T-cell (primary cell): ENCODE measurements at regions of chr7 and their contacts with region 1.

Region 1: GRCh38 chr7:2257651-2258050 is 15.6 kb downstream of the NUDT1 start:
- DNase-seq: no peak
- ATAC-seq: no peak
- H3K4me3 ChIP-seq: no peak overlapping the region
- H3K4me3 Mint-ChIP-seq: no peak overlapping the region
- H3K27ac ChIP-seq: no peak overlapping the region
- H3K27ac Mint-ChIP-seq: no peak overlapping the region
- H3K4me1 ChIP-seq: peaks cover 2 to 31% of the 10 kb centered on the region in 2 experiments
- H3K4me1 Mint-ChIP-seq: peaks cover 10 to 17% (median 12%) of the 10 kb centered on the region in 3 donors
- H3K27me3 ChIP-seq: no peaks in the 10 kb centered on the region
- H3K27me3 Mint-ChIP-seq: no peaks in the 10 kb centered on the region

Region 2: DNA sequence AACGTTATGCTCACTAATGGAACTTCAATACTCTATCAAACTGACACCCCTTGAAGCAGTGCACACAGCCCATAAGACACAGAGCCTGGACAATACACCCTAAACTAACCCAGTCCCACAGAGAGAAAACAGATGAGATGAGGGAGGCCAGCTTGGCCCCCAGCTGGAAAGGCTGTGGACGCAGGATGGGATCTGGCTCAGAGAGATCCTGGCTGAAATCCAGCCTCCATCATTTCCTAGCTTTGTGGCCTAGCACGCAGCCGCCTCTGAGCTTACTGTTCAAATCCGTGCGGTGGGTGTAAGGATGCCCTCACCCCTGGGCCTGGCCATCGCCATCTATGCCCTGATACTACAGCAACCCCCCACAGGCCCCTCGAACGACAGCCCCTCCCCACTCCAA is 23.9 kb after region 1 on chr7:
- CTCF ChIA-PET with region 1: no interaction called
- POLR2A ChIA-PET with region 1: no interaction called
- DNase-seq: no peak
- ATAC-seq: no peak
- H3K4me3 ChIP-seq: no peak overlapping the region
- H3K4me3 Mint-ChIP-seq: no peak overlapping the region
- H3K27ac ChIP-seq: no peak overlapping the region
- H3K27ac Mint-ChIP-seq: no peak overlapping the region
- H3K4me1 ChIP-seq: no peaks in the 10 kb centered on the region
- H3K4me1 Mint-ChIP-seq: peaks cover 0 to 4% (median 0%) of the 10 kb centered on the region in 3 donors
- H3K27me3 ChIP-seq: no peaks in the 10 kb centered on the region
- H3K27me3 Mint-ChIP-seq: no peaks in the 10 kb centered on the region

Region 3: DNA sequence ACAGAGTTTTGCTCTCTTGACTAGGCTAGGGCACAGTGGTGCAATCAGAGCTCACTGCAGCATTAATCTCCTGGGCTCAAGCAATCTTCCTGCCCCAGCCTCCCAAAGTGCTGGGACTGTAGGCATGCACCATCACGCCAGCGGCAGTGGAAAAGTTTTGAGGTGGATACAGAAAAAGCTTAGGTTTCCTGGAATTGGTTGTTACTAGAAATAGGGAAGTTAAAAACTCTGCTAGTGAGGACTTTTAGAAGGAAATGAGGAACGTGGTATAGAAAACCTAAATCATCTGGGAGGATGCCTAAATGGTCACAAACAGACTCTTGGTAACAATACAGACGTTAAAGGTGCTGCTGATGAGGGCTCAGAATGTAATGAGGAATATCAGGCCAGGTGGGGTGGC is 67.5 kb after region 1 on chr7:
- CTCF ChIA-PET with region 1: no interaction called
- POLR2A ChIA-PET with region 1: no interaction called
- DNase-seq: no peak
- ATAC-seq: no peak
- H3K4me3 ChIP-seq: no peak overlapping the region
- H3K4me3 Mint-ChIP-seq: no peak overlapping the region
- H3K27ac ChIP-seq: no peak overlapping the region
- H3K27ac Mint-ChIP-seq: no peak overlapping the region
- H3K4me1 ChIP-seq: no peaks in the 10 kb centered on the region
- H3K4me1 Mint-ChIP-seq: no peaks in the 10 kb centered on the region
- H3K27me3 ChIP-seq: peaks cover 0 to 12% of the 10 kb centered on the region in 2 experiments
- H3K27me3 Mint-ChIP-seq: no peaks in the 10 kb centered on the region

Region 4: GRCh38 chr7:2354186-2354938 is 96.7 kb after region 1 on chr7 and contains the start of gene EIF3B:
- CTCF ChIA-PET with region 1: no interaction called
- POLR2A ChIA-PET with region 1: no interaction called
- DNase-seq: peak; percentile 80 to 95 (median 88)
- ATAC-seq: peak; percentile 88 to 89 (median 89)
- H3K4me3 ChIP-seq: peak within 1 kb of the TSS; percentile 62 to 88
- H3K4me3 Mint-ChIP-seq: peak within 1 kb of the TSS; percentile 82 to 97 (median 91)
- H3K27ac ChIP-seq: peak within 1 kb of the TSS; percentile 96
- H3K27ac Mint-ChIP-seq: peak within 1 kb of the TSS; percentile 100
- H3K4me1 ChIP-seq: peaks cover 15 to 51% of the 10 kb centered on the region in 2 experiments
- H3K4me1 Mint-ChIP-seq: peaks cover 37 to 38% (median 38%) of the 10 kb centered on the region in 3 donors
- H3K27me3 ChIP-seq: no peaks in the 10 kb centered on the region
- H3K27me3 Mint-ChIP-seq: no peaks in the 10 kb centered on the region
- total RNA-seq, gene EIF3B: 150 to 169 (median 165) TPM

Region 5: GRCh38 chr7:2527505-2528451 is 270.1 kb after region 1 on chr7:
- CTCF ChIA-PET with region 1: no interaction called
- POLR2A ChIA-PET with region 1: interaction called in 1 of 2 experiments, 11 read pairs
- DNase-seq: peak in 19 of 35 experiments; percentile 31 to 73 (median 51)
- ATAC-seq: peak in 3 of 4 experiments; percentile 17 to 28 (median 24)
- H3K4me3 ChIP-seq: peak overlapping the region in 1 of 2 donors; percentile 4
- H3K4me3 Mint-ChIP-seq: peak overlapping the region; percentile 28 to 70 (median 36)
- H3K27ac ChIP-seq: peak overlapping the region; percentile 95
- H3K27ac Mint-ChIP-seq: peak overlapping the region; percentile 86 to 89
- H3K4me1 ChIP-seq: peaks cover 49 to 85% of the 10 kb centered on the region in 2 experiments
- H3K4me1 Mint-ChIP-seq: peaks cover 65 to 80% (median 69%) of the 10 kb centered on the region in 3 donors
- H3K27me3 ChIP-seq: no peaks in the 10 kb centered on the region
- H3K27me3 Mint-ChIP-seq: no peaks in the 10 kb centered on the region